HEK293 (cell line): ENCODE measurements at regions of chr2 and their contacts with region 1.

Region 1: GRCh38 chr2:191758518-191759507 is 80.9 kb downstream of the NABP1 start:
- H3K4me3 ChIP-seq: no peak overlapping the region
- H3K27ac ChIP-seq: no peak overlapping the region
- H3K4me1 ChIP-seq: no peaks in the 10 kb centered on the region
- CTCF ChIP-seq: peak; percentile 45; the same call in 1 of the 2 replicates

Region 2: DNA sequence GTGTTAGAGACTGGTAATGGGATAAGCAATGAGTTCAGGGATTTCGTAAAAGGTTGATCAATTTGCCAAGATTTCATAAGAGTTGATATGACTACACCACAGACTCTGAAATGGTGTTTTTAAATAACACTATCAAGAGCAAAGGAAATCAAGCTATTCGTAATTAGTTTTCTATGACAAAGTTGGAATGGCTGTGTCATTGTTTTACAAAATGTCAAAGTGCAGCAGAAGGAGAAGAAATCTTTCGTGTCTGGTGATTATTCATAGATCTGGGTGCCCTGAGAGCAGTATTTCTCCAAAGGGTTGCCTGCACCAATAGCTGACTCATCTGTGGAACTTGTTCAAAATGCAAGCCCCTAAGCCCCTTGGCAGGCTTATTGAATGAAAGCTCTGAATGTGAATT is 10.8 kb before region 1 on chr2:
- CTCF ChIA-PET with region 1: interaction called, 24 read pairs
- POLR2A ChIA-PET with region 1: no interaction called
- H3K4me3 ChIP-seq: no peak overlapping the region
- H3K27ac ChIP-seq: no peak overlapping the region
- H3K4me1 ChIP-seq: no peaks in the 10 kb centered on the region
- CTCF ChIP-seq: no peak

Region 3: GRCh38 chr2:191773136-191773535 is 14.3 kb after region 1 on chr2:
- CTCF ChIA-PET with region 1: interaction called, 21 read pairs
- POLR2A ChIA-PET with region 1: interaction called, 4 read pairs
- H3K4me3 ChIP-seq: no peak overlapping the region
- H3K27ac ChIP-seq: no peak overlapping the region
- H3K4me1 ChIP-seq: no peaks in the 10 kb centered on the region
- CTCF ChIP-seq: no peak